GM18951 (cell line): ENCODE measurements at regions of chr15 and their contacts with region 1.

Region 1: GRCh38 chr15:40928821-40929659 is at the start of gene DLL4:
- POLR2A ChIP-seq: peak; percentile 76

Region 2: GRCh38 chr15:40873625-40874561 is 55.1 kb before region 1 on chr15 and contains the start of gene RHOV:
- in situ Hi-C with region 1: no loop called
- POLR2A ChIP-seq: peak; percentile 62

Region 3: DNA sequence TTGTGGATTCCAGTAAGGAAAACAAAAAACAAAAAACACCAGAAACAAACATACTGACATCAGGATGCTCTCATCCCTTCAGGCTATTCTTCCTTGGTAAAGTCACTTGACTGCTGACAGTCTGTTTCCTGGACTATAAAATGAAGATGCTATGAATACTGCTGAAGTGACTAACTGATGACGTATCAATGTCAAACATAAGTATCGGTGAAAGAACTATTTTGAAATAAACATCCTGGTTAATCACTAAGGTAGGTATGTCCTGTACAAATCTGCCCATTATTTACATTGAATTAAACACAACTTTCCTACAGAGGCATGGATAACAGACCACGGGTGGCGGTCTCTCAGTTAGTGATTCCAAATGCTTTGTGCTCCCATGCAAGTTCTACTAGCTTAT is 70.2 kb after region 1 on chr15:
- in situ Hi-C with region 1: no loop called
- POLR2A ChIP-seq: no peak

Region 4: GRCh38 chr15:41215708-41216107 is 286.7 kb after region 1 on chr15:
- in situ Hi-C with region 1: no loop called
- POLR2A ChIP-seq: no peak

Region 5: DNA sequence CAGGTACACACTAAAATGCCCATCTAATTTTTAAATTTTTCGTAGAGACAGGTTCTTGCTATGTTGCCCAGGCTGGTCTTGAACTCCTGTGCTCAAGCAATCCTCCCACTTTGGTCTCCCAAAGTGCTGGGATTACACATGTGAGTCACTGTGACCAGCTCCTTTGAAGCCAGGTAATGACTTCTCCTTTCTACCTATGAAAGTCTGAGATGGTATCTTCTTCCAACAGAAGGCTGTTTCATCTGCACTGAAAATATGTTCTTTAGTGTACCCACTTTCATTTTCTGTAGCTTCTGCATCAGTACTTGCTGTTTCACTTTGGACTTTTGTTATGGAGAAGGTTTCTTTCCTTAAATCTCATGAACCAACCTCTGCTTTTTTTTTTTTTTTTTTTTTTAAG is 394.6 kb after region 1 on chr15:
- in situ Hi-C with region 1: loop called (anchors 10 kb)
- POLR2A ChIP-seq: no peak